Thyroid gland (tissue), 4 donors: ENCODE measurements at regions of chr17 and their contacts with region 1.

Region 1: DNA sequence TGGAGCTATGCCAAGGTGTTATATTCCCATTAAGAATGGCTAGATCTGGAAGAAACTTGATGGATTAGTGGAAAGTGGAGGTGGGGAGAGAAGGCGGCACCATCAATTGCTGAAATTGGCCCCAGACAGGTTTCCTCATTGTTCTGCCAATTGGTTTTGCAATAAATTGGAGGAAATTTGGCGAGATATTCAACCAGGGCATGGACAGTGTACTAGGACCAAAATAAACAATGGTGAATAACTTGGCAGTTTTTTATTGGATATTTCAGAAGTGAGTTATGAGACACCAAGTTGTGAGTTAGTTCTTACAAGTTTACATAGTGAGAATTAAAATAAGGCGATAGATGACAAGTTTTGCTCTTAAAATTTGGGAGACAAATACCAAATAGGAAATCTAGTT is 41.1 kb upstream of the SOX9 start:
- DNase-seq: no peak
- H3K4me3 ChIP-seq: no peak overlapping the region
- H3K27ac ChIP-seq: no peak overlapping the region
- H3K4me1 ChIP-seq: no peaks in the 10 kb centered on the region
- H3K27me3 ChIP-seq: no peaks in the 10 kb centered on the region
- CTCF ChIP-seq: no peak
- POLR2A ChIP-seq: no peak

Region 2: DNA sequence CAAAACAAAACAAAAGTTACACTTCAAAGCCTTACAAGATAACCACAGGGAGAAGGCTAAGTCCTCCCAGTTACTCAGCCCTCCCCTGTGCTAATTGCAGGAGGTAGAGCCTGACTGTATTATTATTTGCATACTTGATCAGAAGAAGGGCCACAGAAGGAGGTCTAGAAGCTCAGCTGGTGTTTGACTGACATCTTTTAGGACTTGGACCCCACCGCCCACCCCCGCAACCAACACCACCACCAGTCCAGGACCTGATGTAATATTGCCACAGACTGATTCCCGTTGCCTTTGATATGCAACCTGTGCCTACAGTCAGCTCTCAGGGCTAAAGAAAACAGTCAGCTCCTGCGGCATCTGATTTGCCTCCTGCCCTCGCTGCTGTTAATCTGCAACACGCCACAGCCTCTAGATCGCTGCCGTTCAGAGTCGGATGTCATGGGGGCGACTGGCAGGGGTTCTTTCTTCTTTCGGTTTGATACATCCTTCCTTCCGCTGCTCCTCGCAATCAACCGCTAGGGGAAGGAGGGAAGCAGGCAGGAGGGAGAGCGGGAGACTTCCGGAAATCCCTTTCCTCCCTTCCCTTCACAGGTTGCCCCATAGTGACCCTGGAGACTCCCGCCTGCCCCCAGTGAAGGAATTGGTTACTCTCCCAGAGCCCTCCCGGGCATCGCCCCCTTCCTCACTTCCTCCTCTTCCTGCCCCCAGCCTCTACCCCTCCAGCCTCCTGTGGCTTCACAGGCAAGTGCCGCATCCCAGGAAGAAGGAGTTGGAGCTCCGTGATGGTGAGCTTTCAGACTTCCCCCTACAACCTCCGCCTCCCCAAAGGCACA is 49.4 kb before region 1 on chr17:
- intact Hi-C with region 1: loop called (anchors 10 kb)
- DNase-seq: peak; percentile 36 to 57
- H3K4me3 ChIP-seq: peak overlapping the region in 2 of 3 donors; percentile 11 to 27
- H3K27ac ChIP-seq: peak overlapping the region in 1 of 3 donors; percentile 16
- H3K4me1 ChIP-seq: peaks cover 5 to 9% of the 10 kb centered on the region in 2 donors
- H3K27me3 ChIP-seq: no peaks in the 10 kb centered on the region
- CTCF ChIP-seq: peak in 5 of 6 experiments; percentile 10 to 52 (median 51)
- POLR2A ChIP-seq: peak in 1 of 2 donors; percentile 39